Activated naive CD4-positive, alpha-beta T cell treated with anti-CD3 and anti-CD28 coated beads for 36 hours (primary cell): ENCODE measurements at regions of chr14 and their contacts with region 1.

Region 1: GRCh38 chr14:74493343-74494261 is at the start of gene ISCA2:
- DNase-seq: peak; percentile 100
- H3K4me3 Mint-ChIP-seq: no peak within 1 kb of the TSS
- H3K27ac Mint-ChIP-seq: peak within 1 kb of the TSS; percentile 86
- H3K4me1 Mint-ChIP-seq: peaks cover 25% of the 10 kb centered on the region
- H3K27me3 Mint-ChIP-seq: no peaks in the 10 kb centered on the region
- total RNA-seq, gene ISCA2: 27.7 to 30.9 TPM

Region 2: DNA sequence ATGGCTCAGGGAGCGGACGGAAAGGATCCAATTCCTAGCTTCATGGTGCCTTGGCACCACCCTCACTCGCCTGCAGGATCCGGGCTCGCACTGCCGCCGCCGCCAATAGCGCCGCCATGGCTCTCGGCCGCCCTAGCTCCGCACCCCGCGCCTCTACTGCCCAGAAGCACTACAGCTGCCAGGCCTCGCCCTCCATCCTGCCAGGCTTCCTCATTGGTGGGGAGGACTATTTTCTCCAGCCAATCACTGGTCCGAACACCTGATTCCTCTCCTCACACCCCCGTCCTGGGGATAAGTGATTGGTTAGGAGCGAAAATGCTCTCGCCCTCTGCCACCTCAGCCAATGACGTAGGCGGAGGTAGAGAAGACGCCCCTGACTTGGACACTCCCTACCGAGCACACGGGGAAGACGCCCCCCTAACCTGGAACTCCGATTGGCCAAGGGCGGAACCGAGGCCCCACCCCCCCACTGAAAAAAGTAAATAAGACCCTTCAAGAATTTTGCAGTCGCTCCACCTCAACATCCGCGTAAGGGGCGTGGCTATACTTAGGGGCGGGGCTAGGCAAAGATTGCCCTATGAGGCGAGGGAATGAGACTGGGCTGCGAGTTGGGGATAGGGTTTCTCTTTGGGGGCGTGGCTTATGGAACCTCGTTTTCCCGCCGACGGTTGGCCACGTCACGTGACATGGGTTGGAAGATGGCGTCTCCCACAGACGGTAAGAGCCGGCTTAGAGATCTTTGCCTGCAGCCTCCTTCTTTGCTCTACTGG is 409.1 kb before region 1 on chr14 and contains the starts of genes ALDH6A1 and LIN52:
- CTCF ChIA-PET with region 1: no interaction called
- intact Hi-C with region 1: loop called (anchors 1 kb)
- DNase-seq: peak; percentile 100
- H3K4me3 Mint-ChIP-seq: peak within 1 kb of the TSS; percentile 99
- H3K27ac Mint-ChIP-seq: peak within 1 kb of the TSS; percentile 95
- H3K4me1 Mint-ChIP-seq: peaks cover 38% of the 10 kb centered on the region
- H3K27me3 Mint-ChIP-seq: no peaks in the 10 kb centered on the region
- total RNA-seq, gene ALDH6A1: 24.0 to 25.3 TPM
- total RNA-seq, gene LIN52: 10.7 to 13.6 TPM

Region 3: DNA sequence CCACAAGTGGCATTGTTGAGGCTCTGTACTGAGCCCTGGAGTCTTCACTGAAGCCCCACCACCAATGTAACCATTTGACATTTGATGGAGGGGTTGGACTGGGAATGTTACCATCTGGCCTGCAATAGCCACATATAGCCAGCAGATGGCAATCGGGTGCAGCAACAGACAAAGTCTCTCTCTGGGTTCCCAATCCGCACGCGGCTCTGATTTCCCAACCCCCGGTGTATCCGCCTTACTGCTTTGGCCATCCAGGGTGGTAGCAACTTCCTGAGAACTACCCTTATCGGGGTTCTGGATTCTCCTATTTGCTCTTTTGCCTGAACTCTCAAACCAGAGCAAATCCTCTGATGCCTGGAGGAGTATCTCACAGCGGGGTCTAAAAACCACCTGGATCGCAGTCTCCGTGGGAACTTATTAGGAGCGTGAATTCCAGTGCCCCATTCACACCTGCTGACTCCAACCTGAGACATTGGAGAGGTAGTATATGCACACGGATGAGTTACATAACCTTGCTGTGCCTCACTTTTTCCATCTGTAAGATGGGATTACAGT is 131.2 kb before region 1 on chr14:
- CTCF ChIA-PET with region 1: interaction called, 3 read pairs
- intact Hi-C with region 1: loop called (anchors 1 kb)
- DNase-seq: peak; percentile 82
- H3K4me3 Mint-ChIP-seq: no peak overlapping the region
- H3K27ac Mint-ChIP-seq: no peak overlapping the region
- H3K4me1 Mint-ChIP-seq: no peaks in the 10 kb centered on the region
- H3K27me3 Mint-ChIP-seq: peaks cover 8% of the 10 kb centered on the region

Region 4: GRCh38 chr14:74579447-74580274 is 86.1 kb after region 1 on chr14:
- CTCF ChIA-PET with region 1: interaction called, 3 read pairs
- intact Hi-C with region 1: loop called (anchors 1 kb)
- DNase-seq: peak; percentile 88
- H3K4me3 Mint-ChIP-seq: no peak overlapping the region
- H3K27ac Mint-ChIP-seq: peak overlapping the region; percentile 82
- H3K4me1 Mint-ChIP-seq: peaks cover 36% of the 10 kb centered on the region
- H3K27me3 Mint-ChIP-seq: peaks cover 2% of the 10 kb centered on the region

Region 5: DNA sequence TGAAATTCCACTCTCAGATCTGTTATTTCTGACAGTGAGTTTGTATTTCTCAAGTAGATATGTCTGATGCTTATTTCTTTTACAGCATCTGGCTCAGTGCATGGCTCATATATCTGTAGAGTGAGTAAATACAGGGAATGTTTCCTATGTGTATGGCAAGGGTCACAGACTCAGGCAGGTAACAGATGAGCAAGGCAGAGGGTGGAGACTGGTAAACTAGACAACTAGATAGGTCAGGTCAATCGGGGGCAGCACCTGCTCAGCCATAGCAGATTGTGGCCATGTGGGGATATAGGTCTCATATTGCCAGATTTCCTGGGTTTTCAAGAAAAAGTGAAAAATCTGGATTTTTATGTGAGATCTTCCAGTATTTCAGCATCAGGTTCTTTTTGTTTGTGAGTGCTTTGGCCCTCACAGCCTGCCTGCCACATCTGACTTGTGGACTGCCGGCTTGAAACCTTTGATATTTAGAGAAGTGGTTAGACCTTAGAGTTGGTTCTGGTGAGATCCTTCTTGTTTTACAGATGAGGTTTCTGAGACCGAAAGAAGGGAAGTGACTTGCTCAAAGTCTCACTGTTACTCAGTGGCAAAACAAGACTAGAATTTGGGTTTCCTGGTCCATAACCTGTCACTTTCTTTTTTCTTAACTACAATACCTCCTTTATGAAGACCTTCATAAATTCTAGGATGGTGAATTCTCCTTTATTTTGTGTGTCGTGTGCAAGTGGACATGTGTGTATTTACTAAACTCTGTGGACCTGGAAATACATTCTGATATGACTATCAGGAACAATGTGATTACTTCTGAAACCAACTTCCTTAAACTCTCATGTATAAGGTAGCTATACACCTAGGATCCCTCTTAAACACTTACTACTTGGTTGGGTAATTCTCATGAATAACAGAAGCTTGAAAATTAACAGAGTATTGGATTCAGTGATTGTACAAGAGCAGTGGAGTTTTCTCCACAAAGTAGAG is 347.9 kb after region 1 on chr14:
- CTCF ChIA-PET with region 1: no interaction called
- intact Hi-C with region 1: loop called (anchors 5 kb)
- DNase-seq: peak; percentile 46
- H3K4me3 Mint-ChIP-seq: no peak overlapping the region
- H3K27ac Mint-ChIP-seq: peak overlapping the region; percentile 54
- H3K4me1 Mint-ChIP-seq: peaks cover 54% of the 10 kb centered on the region
- H3K27me3 Mint-ChIP-seq: no peaks in the 10 kb centered on the region

Region 6: DNA sequence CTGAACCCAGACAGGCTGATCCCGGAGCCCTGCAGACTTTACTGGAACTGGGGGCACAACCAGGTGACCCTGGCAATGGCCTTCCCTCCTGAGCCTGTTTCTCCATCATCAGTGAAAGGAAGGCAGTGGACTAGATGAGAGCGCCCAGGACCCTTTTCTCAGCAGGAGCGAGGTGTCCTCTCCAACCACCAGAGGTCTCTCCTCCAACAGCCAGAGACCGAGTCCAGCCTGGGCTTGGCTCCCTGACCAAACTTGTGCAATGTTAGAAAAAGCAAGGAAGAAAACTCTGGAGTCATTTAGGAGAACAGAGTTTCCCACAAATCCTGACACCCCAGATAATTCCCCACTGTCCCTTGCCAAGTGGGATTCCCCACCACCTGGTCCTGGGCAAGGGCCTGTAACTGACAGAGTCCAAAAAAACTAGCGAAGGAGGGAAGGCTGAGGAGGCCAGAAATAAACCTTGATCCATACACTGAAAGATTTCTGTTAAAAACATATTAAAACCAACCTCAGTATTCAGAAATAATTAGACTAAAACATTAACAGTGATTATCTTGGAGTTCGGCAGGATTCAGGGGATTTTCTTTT is 420.5 kb after region 1 on chr14:
- CTCF ChIA-PET with region 1: no interaction called
- intact Hi-C with region 1: no loop called
- DNase-seq: peak; percentile 38
- H3K4me3 Mint-ChIP-seq: no peak overlapping the region
- H3K27ac Mint-ChIP-seq: no peak overlapping the region
- H3K4me1 Mint-ChIP-seq: no peaks in the 10 kb centered on the region
- H3K27me3 Mint-ChIP-seq: no peaks in the 10 kb centered on the region

Region 7: GRCh38 chr14:75069045-75069810 is 575.6 kb after region 1 on chr14 and contains the start of gene ZC2HC1C:
- CTCF ChIA-PET with region 1: no interaction called
- intact Hi-C with region 1: loop called (anchors 2 kb)
- DNase-seq: peak; percentile 65
- H3K4me3 Mint-ChIP-seq: peak within 1 kb of the TSS; percentile 11
- H3K27ac Mint-ChIP-seq: no peak within 1 kb of the TSS
- H3K4me1 Mint-ChIP-seq: peaks cover 5% of the 10 kb centered on the region
- H3K27me3 Mint-ChIP-seq: no peaks in the 10 kb centered on the region
- total RNA-seq, gene ZC2HC1C: 0.64 to 0.86 TPM